Sciatic nerve (tissue), 2 donors: ENCODE measurements at regions of chr11 and their contacts with region 1.

Region 1: DNA sequence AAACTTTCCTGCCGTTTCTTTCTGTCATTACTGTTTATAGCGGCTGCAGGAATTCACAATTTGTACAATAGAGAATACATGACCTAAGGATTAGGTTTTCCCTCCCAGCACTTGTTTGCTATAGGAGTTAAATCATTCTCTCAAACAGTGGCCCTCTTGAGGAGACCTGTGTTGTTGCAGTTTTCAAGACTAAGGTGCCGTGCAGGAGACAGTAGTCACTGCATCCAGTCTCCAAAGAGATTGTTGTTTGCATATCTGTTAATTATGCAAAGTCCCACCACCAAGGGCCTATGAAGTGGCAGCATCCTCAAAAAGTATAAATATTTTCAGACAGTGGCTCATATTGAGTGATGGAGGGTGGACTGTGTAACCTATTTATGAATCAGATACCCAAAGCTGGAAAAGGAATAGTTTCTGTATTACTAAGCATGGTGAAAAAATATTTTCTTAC is 2.3 kb downstream of the PRSS23 start:
- DNase-seq: no peak
- ATAC-seq: no peak

Region 2: DNA sequence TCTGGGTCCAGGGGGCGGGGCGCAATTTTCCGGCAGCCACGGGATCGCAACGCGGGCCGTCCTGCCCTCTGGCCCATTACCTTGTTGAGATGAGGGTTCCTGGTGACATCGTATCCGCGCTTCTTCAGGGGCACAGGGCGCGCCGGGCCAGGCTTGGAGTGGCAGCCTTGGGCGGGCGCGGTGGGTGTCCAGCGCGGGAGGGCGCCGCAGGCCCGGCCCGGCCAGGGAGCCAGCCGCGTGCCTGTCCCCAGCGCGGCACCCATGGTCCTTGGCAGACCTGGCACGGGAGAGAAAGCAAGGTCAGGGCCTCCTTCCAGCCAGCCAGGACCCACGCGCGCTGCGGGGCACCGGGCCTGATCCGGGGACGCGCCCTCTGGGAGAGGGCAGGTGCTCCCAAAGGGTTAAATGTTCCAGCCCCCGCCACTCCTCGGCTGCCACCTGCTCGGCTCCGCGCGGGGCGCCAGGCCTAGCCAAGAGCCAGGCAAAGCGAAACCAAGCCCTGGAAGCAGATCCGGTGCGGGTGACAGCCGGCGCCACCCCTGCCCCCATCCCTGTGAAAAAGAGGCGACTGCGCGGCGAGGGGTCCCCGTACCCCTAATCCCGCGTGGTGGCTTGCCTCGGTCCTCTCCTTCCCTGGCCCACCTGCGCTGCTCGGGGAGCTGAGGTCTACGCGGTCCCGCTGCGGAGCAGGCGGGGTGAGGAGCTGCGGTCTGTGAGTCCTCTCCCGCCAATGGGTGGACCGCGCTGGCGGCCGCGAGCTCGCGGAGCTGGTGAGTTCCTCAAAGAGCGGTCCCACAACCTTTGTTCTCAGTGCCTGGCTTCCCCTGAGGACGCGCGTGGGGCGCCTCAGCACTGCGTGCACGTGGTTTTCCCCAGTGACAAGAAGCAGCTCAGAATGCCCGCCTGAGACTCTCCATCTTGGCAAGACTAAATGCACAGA is 130.7 kb before region 1 on chr11 and contains the start of gene ME3:
- intact Hi-C with region 1: loop called (anchors 1 kb)
- DNase-seq: peak; percentile 77
- ATAC-seq: peak; percentile 82
- total RNA-seq, gene ME3: 17.5 TPM

Region 3: DNA sequence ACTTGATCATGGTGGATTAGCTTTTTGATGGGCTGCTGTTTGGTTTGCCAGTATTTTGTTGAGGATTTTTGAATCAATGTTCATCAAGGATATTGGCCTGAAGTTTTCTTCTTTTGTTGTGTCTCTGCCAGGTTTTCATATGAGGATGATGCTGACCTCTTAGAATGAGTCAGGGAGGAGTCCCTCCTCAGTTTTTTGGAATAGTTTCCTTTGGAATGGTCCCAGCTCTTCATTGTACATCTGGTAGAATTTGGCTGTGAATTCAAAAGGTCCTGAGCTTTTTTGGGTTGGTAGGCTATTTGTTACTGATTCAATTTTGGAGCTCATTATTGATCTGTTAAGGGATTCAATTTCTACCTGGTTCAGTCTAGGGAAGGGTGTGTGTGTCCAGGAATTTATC is 1456.8 kb after region 1 on chr11:
- intact Hi-C with region 1: no loop called
- DNase-seq: no peak
- ATAC-seq: no peak